ENCODE measurements at regions of chr7 and their contacts with region 1.

Region 1: DNA sequence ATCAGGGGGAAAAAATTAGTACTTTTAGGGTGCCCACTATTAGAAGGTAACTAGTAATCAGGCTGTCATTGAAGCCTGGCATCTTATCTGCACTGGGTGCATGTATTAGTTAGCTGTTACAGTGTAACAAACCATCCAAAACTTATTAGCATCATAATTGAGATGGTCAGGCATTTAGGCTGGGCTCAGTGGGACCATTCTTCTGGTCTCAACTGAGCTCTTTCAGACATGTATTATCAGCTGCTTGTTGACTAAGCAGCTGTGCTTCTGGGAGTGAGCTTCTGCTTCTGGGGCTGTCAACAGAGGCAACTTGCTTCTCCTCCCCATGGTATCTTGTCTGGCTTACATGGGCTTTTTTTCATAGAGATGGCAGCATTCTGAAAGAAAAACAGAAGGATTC is 154.0 kb upstream of the ZNF92 start:
- DNase-seq: no peak
- H3K4me3 Mint-ChIP-seq: no peak overlapping the region
- H3K27ac Mint-ChIP-seq: no peak overlapping the region
- H3K4me1 Mint-ChIP-seq: no peaks in the 10 kb centered on the region
- H3K27me3 Mint-ChIP-seq: no peaks in the 10 kb centered on the region

Region 2: GRCh38 chr7:64951250-64951848 is 268.3 kb before region 1 on chr7:
- intact Hi-C with region 1: loop called (anchors 2 kb)
- DNase-seq: peak; percentile 68
- H3K4me3 Mint-ChIP-seq: no peak overlapping the region
- H3K27ac Mint-ChIP-seq: no peak overlapping the region
- H3K4me1 Mint-ChIP-seq: no peaks in the 10 kb centered on the region
- H3K27me3 Mint-ChIP-seq: peaks cover 24% of the 10 kb centered on the region